CD4-positive, alpha-beta T cell (primary cell): ENCODE measurements at regions of chr17 and their contacts with region 1.

Region 1: GRCh38 chr17:51764387-51764972 is 394.0 kb downstream of the CA10 start:
- DNase-seq: peak; percentile 2 to 66 (median 10)
- ATAC-seq: peak; percentile 71
- H3K4me3 ChIP-seq: no peak overlapping the region
- H3K4me3 Mint-ChIP-seq: no peak overlapping the region
- H3K27ac ChIP-seq: no peak overlapping the region
- H3K27ac Mint-ChIP-seq: no peak overlapping the region
- H3K4me1 ChIP-seq: no peaks in the 10 kb centered on the region
- H3K4me1 Mint-ChIP-seq: no peaks in the 10 kb centered on the region
- H3K27me3 ChIP-seq: peaks cover 5 to 11% of the 10 kb centered on the region in 2 experiments
- H3K27me3 Mint-ChIP-seq: peaks cover 62% of the 10 kb centered on the region
- CTCF ChIP-seq: peak; percentile 81

Region 2: GRCh38 chr17:52106638-52107261 is 342.3 kb after region 1 on chr17:
- CTCF ChIA-PET with region 1: interaction called, 3 read pairs
- POLR2A ChIA-PET with region 1: no interaction called
- intact Hi-C with region 1: loop called in 1 of 2 experiments (anchors 10 kb)
- DNase-seq: peak in 8 of 14 experiments; percentile 0 to 48 (median 32)
- ATAC-seq: no peak
- H3K4me3 ChIP-seq: no peak overlapping the region
- H3K4me3 Mint-ChIP-seq: no peak overlapping the region
- H3K27ac ChIP-seq: no peak overlapping the region
- H3K27ac Mint-ChIP-seq: no peak overlapping the region
- H3K4me1 ChIP-seq: no peaks in the 10 kb centered on the region
- H3K4me1 Mint-ChIP-seq: no peaks in the 10 kb centered on the region
- H3K27me3 ChIP-seq: peaks cover 0 to 3% of the 10 kb centered on the region in 2 experiments
- H3K27me3 Mint-ChIP-seq: peaks cover 22% of the 10 kb centered on the region
- CTCF ChIP-seq: peak; percentile 54